GM10248 (cell line): ENCODE measurements at regions of chr2 and their contacts with region 1.

Region 1: DNA sequence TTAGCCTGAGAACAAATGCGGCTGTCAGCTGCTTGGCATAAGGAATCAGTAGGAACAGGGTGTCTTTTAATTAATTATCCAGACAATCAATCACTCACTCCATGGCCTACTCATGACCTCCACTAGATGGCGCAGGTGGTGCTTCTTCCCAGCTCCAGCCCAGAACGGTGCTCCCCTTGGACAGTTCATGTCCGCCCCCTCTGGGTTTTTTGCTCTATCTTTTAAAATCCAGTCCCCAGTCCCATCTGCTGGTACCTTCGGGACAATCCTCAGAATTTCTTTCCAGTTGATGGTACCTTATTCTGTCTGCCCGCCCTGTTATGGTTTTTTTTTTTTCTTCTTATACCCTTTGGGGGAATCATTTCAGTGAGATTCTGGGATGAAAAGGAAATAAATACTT is 99.8 kb downstream of the CACNB4 start:
- DNase-seq: peak; percentile 73
- CTCF ChIP-seq: peak; percentile 86

Region 2: GRCh38 chr2:151878655-151879563 is 120.1 kb before region 1 on chr2:
- CTCF ChIA-PET with region 1: no interaction called
- POLR2A ChIA-PET with region 1: no interaction called
- DNase-seq: no peak
- CTCF ChIP-seq: no peak

Region 3: DNA sequence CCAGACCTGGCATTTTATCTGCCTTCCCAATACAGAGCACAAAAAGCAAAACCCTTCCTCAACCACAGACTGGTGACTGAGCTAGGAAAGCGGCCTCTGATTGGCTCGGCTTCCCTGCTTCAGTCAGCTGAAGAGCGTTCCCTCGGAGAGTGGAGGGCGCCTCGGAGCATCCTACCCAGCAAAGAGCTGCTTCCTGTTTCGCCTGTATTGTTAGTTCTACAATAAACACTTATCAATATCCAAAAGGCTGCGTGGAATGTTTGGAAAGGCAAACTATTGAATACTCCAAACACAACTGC is 25.2 kb before region 1 on chr2:
- CTCF ChIA-PET with region 1: interaction called, 18 read pairs
- POLR2A ChIA-PET with region 1: no interaction called
- DNase-seq: no peak
- CTCF ChIP-seq: no peak

Region 4: GRCh38 chr2:151979694-151980093 is 19.4 kb before region 1 on chr2:
- CTCF ChIA-PET with region 1: interaction called, 33 read pairs
- POLR2A ChIA-PET with region 1: no interaction called
- DNase-seq: no peak
- CTCF ChIP-seq: no peak

Region 5: DNA sequence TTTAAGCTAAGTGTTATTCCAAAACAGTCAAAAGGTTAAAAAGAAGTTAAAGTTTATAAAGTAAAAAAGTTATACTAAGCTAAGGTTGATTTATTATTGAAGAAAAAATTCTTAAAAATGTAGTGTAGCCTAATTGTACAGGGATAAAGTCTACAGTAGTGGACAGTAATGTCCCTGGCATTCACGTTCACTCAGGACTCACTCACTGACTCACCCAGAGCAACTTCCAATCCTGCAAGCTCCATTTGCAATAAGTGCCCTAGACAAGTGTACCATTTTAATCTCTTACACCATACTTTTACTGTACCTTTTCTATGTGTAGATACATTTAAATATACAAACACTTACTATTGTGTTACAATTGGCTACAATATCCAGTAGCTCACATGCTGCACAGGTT is 13.6 kb after region 1 on chr2:
- CTCF ChIA-PET with region 1: interaction called, 26 read pairs
- POLR2A ChIA-PET with region 1: no interaction called
- DNase-seq: no peak
- CTCF ChIP-seq: no peak

Region 6: DNA sequence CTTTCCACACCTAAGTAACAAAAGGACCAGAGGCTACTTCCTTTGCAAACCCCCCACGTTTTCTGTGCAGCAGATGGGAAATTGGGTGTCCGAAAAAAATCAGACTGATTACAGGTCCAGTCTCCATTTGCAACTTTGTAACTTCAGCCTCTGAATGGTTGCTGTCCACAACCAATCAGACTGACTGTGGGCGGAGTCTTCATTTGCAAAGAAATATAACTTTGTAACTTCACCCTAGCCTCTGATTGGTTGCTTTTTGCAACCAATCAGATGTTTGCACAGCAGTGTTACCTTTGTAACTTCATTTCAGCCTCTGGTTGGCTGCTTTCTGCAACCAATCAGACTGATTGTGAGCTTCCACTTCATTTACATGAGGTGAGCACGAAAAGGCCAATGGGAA is 127.6 kb after region 1 on chr2:
- CTCF ChIA-PET with region 1: no interaction called
- POLR2A ChIA-PET with region 1: no interaction called
- DNase-seq: no peak
- CTCF ChIP-seq: no peak